Gastrocnemius medialis (tissue), 4 donors: ENCODE measurements at regions of chr4 and their contacts with region 1.

Region 1: GRCh38 chr4:99563310-99564186 is at the start of gene TRMT10A:
- DNase-seq: peak; percentile 97 to 98
- ATAC-seq: peak; percentile 89 to 90
- H3K4me3 ChIP-seq: peak within 1 kb of the TSS; percentile 74 to 88 (median 80)
- H3K27ac ChIP-seq: peak within 1 kb of the TSS; percentile 94 to 97 (median 96)
- H3K4me1 ChIP-seq: peaks cover 19 to 22% of the 10 kb centered on the region in 2 donors
- H3K27me3 ChIP-seq: no peaks in the 10 kb centered on the region
- CTCF ChIP-seq: peak in 2 of 5 experiments; percentile 4 to 26
- POLR2A ChIP-seq: peak; percentile 52 to 66
- total RNA-seq, gene TRMT10A: 2.6 to 7.3 (median 5.9) TPM

Region 2: GRCh38 chr4:99088481-99089365 is 474.8 kb before region 1 on chr4 and contains the start of gene ADH5:
- in situ Hi-C with region 1: no loop called
- intact Hi-C with region 1: loop called (anchors 5 kb)
- DNase-seq: peak; percentile 79 to 87
- ATAC-seq: peak; percentile 84 to 85
- H3K4me3 ChIP-seq: peak within 1 kb of the TSS; percentile 70 to 92 (median 73)
- H3K27ac ChIP-seq: peak within 1 kb of the TSS; percentile 87 to 97 (median 93)
- H3K4me1 ChIP-seq: peaks cover 0 to 23% of the 10 kb centered on the region in 2 donors
- H3K27me3 ChIP-seq: no peaks in the 10 kb centered on the region
- CTCF ChIP-seq: no peak
- POLR2A ChIP-seq: peak; percentile 86 to 87
- total RNA-seq, gene ADH5: 55.2 to 101 (median 72.6) TPM

Region 3: GRCh38 chr4:99633772-99634171 is 70.2 kb after region 1 on chr4:
- in situ Hi-C with region 1: no loop called
- intact Hi-C with region 1: loop called (anchors 5 kb)
- DNase-seq: peak; percentile 86 to 87
- ATAC-seq: peak; percentile 85 to 87
- H3K4me3 ChIP-seq: no peak overlapping the region
- H3K27ac ChIP-seq: peak overlapping the region; percentile 75 to 99 (median 98)
- H3K4me1 ChIP-seq: peaks cover 45 to 68% of the 10 kb centered on the region in 2 donors
- H3K27me3 ChIP-seq: no peaks in the 10 kb centered on the region
- CTCF ChIP-seq: peak in 1 of 5 experiments; percentile 8
- POLR2A ChIP-seq: no peak

Region 4: GRCh38 chr4:99723612-99724011 is 160.1 kb after region 1 on chr4:
- in situ Hi-C with region 1: no loop called
- intact Hi-C with region 1: loop called (anchors 2 kb)
- DNase-seq: peak; percentile 83 to 94
- ATAC-seq: peak; percentile 97 to 98
- H3K4me3 ChIP-seq: no peak overlapping the region
- H3K27ac ChIP-seq: peak overlapping the region; percentile 89 to 95 (median 91)
- H3K4me1 ChIP-seq: peaks cover 38 to 48% of the 10 kb centered on the region in 2 donors
- H3K27me3 ChIP-seq: no peaks in the 10 kb centered on the region
- CTCF ChIP-seq: no peak
- POLR2A ChIP-seq: no peak

Region 5: DNA sequence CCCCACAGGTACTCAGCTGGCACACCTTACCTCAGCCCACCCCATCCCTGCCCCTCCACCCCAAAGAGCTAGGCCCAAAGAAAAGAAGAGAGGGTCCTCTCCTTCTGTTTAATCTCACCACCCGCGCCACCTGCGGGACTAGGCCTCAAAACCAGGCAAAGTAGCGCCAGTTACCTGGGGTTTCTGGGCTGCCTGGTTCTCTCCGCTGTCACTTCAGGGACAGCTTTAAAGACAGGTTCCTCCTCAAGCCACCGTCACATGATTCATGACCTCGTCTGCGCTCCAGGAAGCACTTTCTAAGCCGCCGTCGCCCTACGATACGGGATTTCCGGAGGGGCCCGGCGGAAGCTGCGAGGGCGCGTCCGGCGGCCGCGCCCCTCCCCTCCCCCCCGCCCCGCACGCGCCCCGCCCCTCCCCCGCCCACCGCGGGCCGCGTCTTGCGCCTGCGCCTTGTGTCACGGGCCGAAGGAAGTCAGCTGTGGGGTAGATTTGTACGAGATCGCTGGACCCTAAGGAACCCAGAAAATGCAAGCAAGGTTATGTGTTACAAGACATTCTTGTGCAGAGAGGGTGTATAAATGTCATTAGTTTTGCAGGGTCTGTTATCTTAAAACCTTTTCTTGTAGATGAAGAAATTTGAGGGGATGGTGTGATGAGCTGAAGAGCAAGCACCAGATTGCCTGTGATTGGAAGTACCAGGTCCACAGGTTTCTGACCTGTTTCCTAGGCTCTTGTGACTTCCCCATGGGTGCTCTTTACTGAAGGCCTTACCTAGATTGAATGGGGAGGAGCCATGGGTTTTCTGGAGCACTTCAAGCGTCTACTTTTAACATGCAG is 330.8 kb after region 1 on chr4 and contains the start of gene LAMTOR3:
- in situ Hi-C with region 1: loop called in 2 of 4 experiments (anchors 5 to 10 kb)
- intact Hi-C with region 1: loop called (anchors 1 kb)
- DNase-seq: peak; percentile 88 to 91
- ATAC-seq: peak; percentile 99
- H3K4me3 ChIP-seq: peak within 1 kb of the TSS; percentile 85 to 95 (median 89)
- H3K27ac ChIP-seq: peak within 1 kb of the TSS; percentile 85 to 92 (median 88)
- H3K4me1 ChIP-seq: peaks cover 16 to 21% of the 10 kb centered on the region in 2 donors
- H3K27me3 ChIP-seq: no peaks in the 10 kb centered on the region
- CTCF ChIP-seq: no peak
- POLR2A ChIP-seq: peak; percentile 29 to 33
- total RNA-seq, gene LAMTOR3: 20.8 to 31.1 (median 28.9) TPM

Region 6: DNA sequence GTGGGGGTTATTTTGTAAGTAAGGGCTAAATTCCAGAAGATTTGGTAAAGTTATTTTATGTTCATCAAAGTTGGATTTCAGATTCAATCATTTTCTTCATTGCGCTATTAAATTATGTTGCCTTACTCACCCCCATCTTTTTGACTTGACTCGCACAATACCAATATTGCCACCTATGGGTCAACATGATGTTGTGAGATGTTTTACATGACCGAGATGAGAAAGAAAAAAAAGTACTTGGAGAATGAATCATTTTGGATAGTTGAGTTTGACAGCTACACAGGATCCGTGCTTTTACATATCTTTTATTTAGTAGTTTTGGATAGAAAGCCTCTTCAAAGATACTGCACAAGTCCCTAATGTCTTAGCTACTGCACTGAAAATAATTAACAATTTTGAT is 1178.5 kb after region 1 on chr4:
- in situ Hi-C with region 1: no loop called
- intact Hi-C with region 1: no loop called
- DNase-seq: no peak
- ATAC-seq: peak in 1 of 2 donors; percentile 56
- H3K4me3 ChIP-seq: no peak overlapping the region
- H3K27ac ChIP-seq: no peak overlapping the region
- H3K4me1 ChIP-seq: no peaks in the 10 kb centered on the region
- H3K27me3 ChIP-seq: no peaks in the 10 kb centered on the region
- CTCF ChIP-seq: peak in 3 of 5 experiments; percentile 15 to 51 (median 49)
- POLR2A ChIP-seq: no peak

Region 7: DNA sequence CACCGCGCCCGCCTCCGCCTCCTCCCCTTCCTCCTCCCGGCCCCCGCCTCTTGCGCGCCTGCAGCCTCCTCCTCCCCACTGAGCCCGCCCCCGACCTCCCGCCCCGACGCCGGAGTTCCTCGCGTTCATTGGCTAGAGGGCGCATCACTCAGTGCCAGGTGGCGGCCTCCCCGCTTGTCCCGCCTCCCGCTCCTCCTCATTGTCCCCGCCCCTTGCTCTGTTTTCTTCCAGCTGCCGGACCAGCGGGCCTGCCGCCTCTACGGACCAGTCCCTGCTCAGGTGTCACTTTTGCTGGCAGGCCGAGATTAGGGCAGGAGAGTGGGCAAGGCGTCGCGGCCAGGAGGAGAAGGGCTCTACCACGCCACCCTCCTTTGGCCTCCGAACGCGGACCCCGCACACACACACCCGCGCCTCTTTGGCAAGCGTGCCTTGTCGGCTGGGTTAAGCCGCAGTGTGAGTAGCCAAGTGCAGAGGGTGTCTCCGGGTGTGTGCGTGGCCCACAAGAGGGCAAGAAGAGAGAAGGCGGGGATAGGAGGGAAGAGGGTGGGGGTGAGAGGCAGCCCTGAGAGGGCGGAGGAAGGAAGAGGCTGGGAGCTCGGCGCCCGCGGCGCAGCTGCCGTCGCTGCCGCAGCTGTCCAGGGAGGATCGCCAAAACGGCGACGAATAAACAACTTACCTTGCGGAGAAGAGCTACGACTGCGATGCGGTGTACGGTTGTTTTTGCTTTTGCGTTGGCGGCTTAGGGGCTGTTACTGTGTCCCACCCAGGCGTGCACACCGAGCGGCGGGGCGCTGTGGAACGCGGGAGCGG is 1784.2 kb after region 1 on chr4:
- in situ Hi-C with region 1: no loop called
- intact Hi-C with region 1: loop called (anchors 10 kb)
- DNase-seq: peak; percentile 99
- ATAC-seq: peak; percentile 75 to 84
- H3K4me3 ChIP-seq: peak overlapping the region; percentile 82 to 96 (median 90)
- H3K27ac ChIP-seq: peak overlapping the region; percentile 95 to 100 (median 96)
- H3K4me1 ChIP-seq: peaks cover 31 to 40% of the 10 kb centered on the region in 2 donors
- H3K27me3 ChIP-seq: no peaks in the 10 kb centered on the region
- CTCF ChIP-seq: peak in 3 of 5 experiments; percentile 10 to 32 (median 13)
- POLR2A ChIP-seq: peak; percentile 63 to 77